ENCODE measurements at regions of chr17 and their contacts with region 1.

Region 1: GRCh38 chr17:67647482-67647881 is 70.3 kb upstream of the NOL11 start:
- DNase-seq: peak; percentile 67
- ATAC-seq: peak; percentile 59
- H3K4me3 ChIP-seq: no peak overlapping the region
- H3K27ac ChIP-seq: peak overlapping the region; percentile 92
- H3K4me1 ChIP-seq: peaks cover 60% of the 10 kb centered on the region
- H3K27me3 ChIP-seq: no peaks in the 10 kb centered on the region
- CTCF ChIP-seq: no peak
- EP300 ChIP-seq: peak in 1 of 2 experiments; percentile 78; a peak in 2 of 4 replicates
- POLR2A ChIP-seq: no peak
- RAD21 ChIP-seq: peak; percentile 34; the same call in 1 of the 2 replicates

Region 2: GRCh38 chr17:67559377-67559966 is 88.0 kb before region 1 on chr17:
- CTCF ChIA-PET with region 1: interaction called, 35 read pairs
- POLR2A ChIA-PET with region 1: no interaction called
- RAD21 ChIA-PET with region 1: interaction called, 18 read pairs
- SMC1A ChIA-PET with region 1: interaction called, 9 read pairs
- in situ Hi-C with region 1: no loop called
- intact Hi-C with region 1: no loop called
- DNase-seq: no peak
- ATAC-seq: peak; percentile 90
- H3K4me3 ChIP-seq: no peak overlapping the region
- H3K27ac ChIP-seq: no peak overlapping the region
- H3K4me1 ChIP-seq: peaks cover 5% of the 10 kb centered on the region
- H3K27me3 ChIP-seq: no peaks in the 10 kb centered on the region
- CTCF ChIP-seq: peak; percentile 53 to 66 (median 60)
- EP300 ChIP-seq: no peak
- POLR2A ChIP-seq: no peak
- RAD21 ChIP-seq: peak; percentile 65

Region 3: DNA sequence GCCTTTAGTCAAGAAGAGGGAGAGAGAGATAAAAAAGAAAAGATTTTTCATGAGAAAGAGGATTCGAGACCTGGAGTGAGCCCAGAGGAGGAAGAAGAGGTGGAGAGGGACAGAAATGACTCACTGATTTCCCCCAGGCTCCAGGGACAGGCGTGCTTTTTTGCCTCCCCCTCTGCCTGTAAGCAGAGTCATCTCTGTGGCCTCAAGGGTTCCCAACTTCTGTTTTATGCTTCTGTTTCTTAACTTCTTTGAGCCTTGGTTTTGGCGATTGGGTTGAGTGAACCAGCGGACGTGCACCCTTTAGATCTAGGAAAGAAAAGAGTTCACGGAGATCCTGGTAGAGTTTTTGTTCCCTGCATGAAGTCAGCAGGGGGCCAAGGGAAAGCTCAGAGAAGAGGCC is 77.6 kb before region 1 on chr17:
- CTCF ChIA-PET with region 1: interaction called, 36 read pairs
- POLR2A ChIA-PET with region 1: interaction called, 53 read pairs
- RAD21 ChIA-PET with region 1: interaction called, 40 read pairs
- SMC1A ChIA-PET with region 1: interaction called, 156 read pairs
- in situ Hi-C with region 1: no loop called
- intact Hi-C with region 1: loop called (anchors 1 kb)
- DNase-seq: peak; percentile 57
- ATAC-seq: peak; percentile 49
- H3K4me3 ChIP-seq: peak overlapping the region; percentile 57
- H3K27ac ChIP-seq: peak overlapping the region; percentile 88
- H3K4me1 ChIP-seq: peaks cover 60% of the 10 kb centered on the region
- H3K27me3 ChIP-seq: no peaks in the 10 kb centered on the region
- CTCF ChIP-seq: no peak
- EP300 ChIP-seq: peak; percentile 58 to 69; a peak in 2 of 4 replicates
- POLR2A ChIP-seq: no peak
- RAD21 ChIP-seq: no peak

Region 4: GRCh38 chr17:67594115-67594880 is 53.2 kb before region 1 on chr17:
- CTCF ChIA-PET with region 1: interaction called, 10 read pairs
- POLR2A ChIA-PET with region 1: interaction called, 4 read pairs
- RAD21 ChIA-PET with region 1: interaction called, 31 read pairs
- SMC1A ChIA-PET with region 1: interaction called, 17 read pairs
- in situ Hi-C with region 1: no loop called
- intact Hi-C with region 1: no loop called
- DNase-seq: peak; percentile 82
- ATAC-seq: peak; percentile 88
- H3K4me3 ChIP-seq: no peak overlapping the region
- H3K27ac ChIP-seq: peak overlapping the region; percentile 82
- H3K4me1 ChIP-seq: peaks cover 20% of the 10 kb centered on the region
- H3K27me3 ChIP-seq: no peaks in the 10 kb centered on the region
- CTCF ChIP-seq: no peak
- EP300 ChIP-seq: peak; percentile 5 to 6; a peak in 1 of 4 replicates
- POLR2A ChIP-seq: no peak
- RAD21 ChIP-seq: peak; percentile 39; the same call in 1 of the 2 replicates

Region 5: DNA sequence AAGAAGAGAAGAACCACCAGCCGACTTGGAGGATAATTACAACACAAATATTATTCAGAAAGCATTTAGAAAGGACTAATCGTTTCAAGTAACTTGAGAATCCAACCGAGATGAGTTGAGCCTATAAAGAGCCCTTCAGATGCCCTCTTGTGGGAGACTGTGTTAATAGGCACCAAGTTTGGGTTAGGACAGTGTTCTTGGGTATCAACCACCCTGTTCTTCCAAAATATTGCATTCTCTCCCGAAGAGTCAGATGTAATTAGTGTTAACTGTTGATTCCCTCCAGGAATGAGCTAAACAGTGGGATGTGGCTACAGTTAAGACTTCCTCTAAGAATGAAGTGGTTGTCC is 17.5 kb before region 1 on chr17:
- CTCF ChIA-PET with region 1: interaction called, 74 read pairs
- POLR2A ChIA-PET with region 1: interaction called, 7 read pairs
- RAD21 ChIA-PET with region 1: interaction called, 44 read pairs
- SMC1A ChIA-PET with region 1: interaction called, 55 read pairs
- in situ Hi-C with region 1: no loop called
- intact Hi-C with region 1: no loop called
- DNase-seq: no peak
- ATAC-seq: peak; percentile 72
- H3K4me3 ChIP-seq: no peak overlapping the region
- H3K27ac ChIP-seq: no peak overlapping the region; the same call in 1 of the 2 replicates
- H3K4me1 ChIP-seq: peaks cover 15% of the 10 kb centered on the region
- H3K27me3 ChIP-seq: no peaks in the 10 kb centered on the region
- CTCF ChIP-seq: peak; percentile 47 to 53 (median 52); a peak in 4 of 6 replicates
- EP300 ChIP-seq: no peak
- POLR2A ChIP-seq: no peak
- RAD21 ChIP-seq: peak; percentile 68

Region 6: DNA sequence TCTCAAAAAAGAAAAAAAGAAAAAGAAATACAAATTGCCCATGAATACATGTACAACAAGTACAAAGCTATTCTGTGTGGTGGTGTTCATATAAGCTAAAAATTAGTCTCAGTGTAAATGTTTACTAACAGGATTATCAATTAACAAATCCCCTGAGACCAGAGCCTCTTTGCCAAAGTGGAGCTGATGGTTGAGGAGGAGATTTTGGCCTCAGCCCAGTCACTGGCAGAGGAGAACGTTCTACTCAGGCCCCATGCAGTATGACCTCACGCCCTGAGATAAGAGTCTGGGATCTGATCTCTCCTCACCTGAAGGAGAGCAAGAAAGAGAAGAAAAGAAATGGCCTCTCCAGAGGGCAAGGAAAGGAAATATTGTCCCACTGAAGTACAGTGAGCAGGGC is 34.7 kb after region 1 on chr17:
- CTCF ChIA-PET with region 1: interaction called, 75 read pairs
- POLR2A ChIA-PET with region 1: interaction called, 19 read pairs
- RAD21 ChIA-PET with region 1: interaction called, 80 read pairs
- SMC1A ChIA-PET with region 1: interaction called, 101 read pairs
- in situ Hi-C with region 1: no loop called
- intact Hi-C with region 1: loop called (anchors 1 kb)
- DNase-seq: no peak
- ATAC-seq: no peak
- H3K4me3 ChIP-seq: no peak overlapping the region
- H3K27ac ChIP-seq: no peak overlapping the region
- H3K4me1 ChIP-seq: peaks cover 24% of the 10 kb centered on the region
- H3K27me3 ChIP-seq: no peaks in the 10 kb centered on the region
- CTCF ChIP-seq: no peak
- EP300 ChIP-seq: no peak
- POLR2A ChIP-seq: no peak
- RAD21 ChIP-seq: no peak

Region 7: DNA sequence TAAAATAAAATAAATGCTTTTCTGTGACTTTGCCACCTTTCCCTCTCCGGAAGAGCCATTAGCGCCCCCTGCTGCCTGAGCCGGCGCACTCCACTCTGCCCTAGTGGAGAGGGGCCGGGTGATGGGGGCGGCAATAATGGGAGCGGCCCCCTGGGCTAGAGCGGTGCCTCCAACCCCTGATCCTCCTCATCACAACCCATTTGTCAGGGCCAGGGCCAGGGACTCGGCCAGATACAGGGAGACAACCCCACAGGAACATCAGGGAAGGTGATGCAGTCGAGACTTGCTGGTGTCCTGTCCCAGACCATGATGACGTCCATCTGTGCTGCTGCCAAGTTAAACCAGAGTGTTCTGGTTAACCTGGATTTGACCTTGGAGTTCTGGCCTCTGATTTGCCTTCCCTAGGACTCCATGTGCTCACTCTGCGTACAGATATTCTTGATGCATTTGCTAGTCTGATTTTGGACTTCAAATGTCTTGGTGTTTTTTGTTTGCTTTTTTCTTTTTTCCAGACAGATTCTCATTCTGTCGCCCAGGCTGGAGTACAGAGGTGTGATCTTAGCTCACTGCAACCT is 131.7 kb after region 1 on chr17:
- CTCF ChIA-PET with region 1: no interaction called
- POLR2A ChIA-PET with region 1: no interaction called
- RAD21 ChIA-PET with region 1: no interaction called
- SMC1A ChIA-PET with region 1: no interaction called
- in situ Hi-C with region 1: no loop called
- intact Hi-C with region 1: no loop called
- DNase-seq: no peak
- ATAC-seq: peak; percentile 94
- H3K4me3 ChIP-seq: no peak overlapping the region
- H3K27ac ChIP-seq: no peak overlapping the region
- H3K4me1 ChIP-seq: no peaks in the 10 kb centered on the region
- H3K27me3 ChIP-seq: no peaks in the 10 kb centered on the region; a peak in 1 of 4 replicates
- CTCF ChIP-seq: peak; percentile 37 to 76 (median 65)
- EP300 ChIP-seq: no peak
- POLR2A ChIP-seq: no peak
- RAD21 ChIP-seq: peak; percentile 62

Region 8: GRCh38 chr17:67942810-67943209 is 295.3 kb after region 1 on chr17:
- CTCF ChIA-PET with region 1: no interaction called
- POLR2A ChIA-PET with region 1: no interaction called
- RAD21 ChIA-PET with region 1: no interaction called
- SMC1A ChIA-PET with region 1: no interaction called
- in situ Hi-C with region 1: no loop called
- intact Hi-C with region 1: no loop called
- DNase-seq: no peak
- ATAC-seq: no peak
- H3K4me3 ChIP-seq: no peak overlapping the region
- H3K27ac ChIP-seq: no peak overlapping the region
- H3K4me1 ChIP-seq: no peaks in the 10 kb centered on the region
- H3K27me3 ChIP-seq: no peaks in the 10 kb centered on the region
- CTCF ChIP-seq: peak; percentile 7 to 35 (median 10); a peak in 2 of 6 replicates
- EP300 ChIP-seq: no peak
- POLR2A ChIP-seq: no peak
- RAD21 ChIP-seq: no peak

Measured in GM12878 (cell line).